ENCODE measurements at regions of chr22 and their contacts with region 1.

Region 1: DNA sequence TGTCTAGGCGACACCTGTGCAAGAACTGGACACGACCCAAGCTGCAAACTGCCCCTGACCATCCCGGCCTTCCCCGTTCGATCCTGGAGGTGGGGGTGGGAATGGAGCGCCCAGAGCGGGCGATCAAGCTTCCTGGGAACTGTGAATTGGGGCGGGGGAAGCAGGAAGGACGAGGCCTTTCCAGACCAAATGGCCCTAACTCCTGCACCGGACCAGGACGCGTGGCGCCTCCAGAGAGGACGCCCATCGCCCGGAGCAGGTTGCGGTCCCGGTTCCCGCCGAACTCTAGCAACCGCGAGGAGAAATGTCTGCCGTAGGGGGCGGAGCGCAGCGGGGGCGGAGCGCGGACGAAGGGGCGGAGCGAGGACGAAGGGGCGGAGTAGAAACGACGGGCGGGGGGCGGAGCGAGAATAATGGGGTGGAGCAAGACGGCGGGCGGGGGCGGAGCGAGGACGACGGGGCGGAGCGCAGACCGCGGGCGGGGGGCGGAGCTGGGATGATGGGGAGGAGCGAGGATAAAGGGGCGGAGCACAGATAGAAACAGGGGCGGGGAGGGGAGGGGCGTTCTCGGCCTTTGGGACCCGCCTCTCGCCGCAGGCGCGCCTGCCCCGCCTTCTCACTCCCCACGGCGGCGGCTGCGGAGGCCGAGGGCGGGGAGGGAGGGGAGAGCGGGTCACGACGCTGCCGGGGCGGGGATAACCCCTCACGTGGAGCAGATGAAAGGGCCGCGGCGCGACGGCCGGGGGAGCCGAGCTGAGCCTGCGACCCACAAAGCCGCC is at the start of gene ZNRF3:
- DNase-seq: peak; percentile 92
- ATAC-seq: peak; percentile 93
- H3K4me3 ChIP-seq: peak within 1 kb of the TSS in 4 of 5 experiments; percentile 65 to 85 (median 69)
- H3K4me3 Mint-ChIP-seq: peak within 1 kb of the TSS; percentile 88
- H3K27ac ChIP-seq: no peak within 1 kb of the TSS
- H3K27ac Mint-ChIP-seq: peak within 1 kb of the TSS; percentile 56
- H3K4me1 ChIP-seq: peaks cover 11 to 15% of the 10 kb centered on the region in 2 donors
- H3K4me1 Mint-ChIP-seq: peaks cover 24% of the 10 kb centered on the region
- H3K27me3 ChIP-seq: peaks cover 0 to 25% (median 23%) of the 10 kb centered on the region in 4 experiments
- H3K27me3 Mint-ChIP-seq: peaks cover 22% of the 10 kb centered on the region
- CTCF ChIP-seq: no peak
- total RNA-seq, gene ZNRF3: 0.70 and 0.71 TPM in 2 replicates

Region 2: DNA sequence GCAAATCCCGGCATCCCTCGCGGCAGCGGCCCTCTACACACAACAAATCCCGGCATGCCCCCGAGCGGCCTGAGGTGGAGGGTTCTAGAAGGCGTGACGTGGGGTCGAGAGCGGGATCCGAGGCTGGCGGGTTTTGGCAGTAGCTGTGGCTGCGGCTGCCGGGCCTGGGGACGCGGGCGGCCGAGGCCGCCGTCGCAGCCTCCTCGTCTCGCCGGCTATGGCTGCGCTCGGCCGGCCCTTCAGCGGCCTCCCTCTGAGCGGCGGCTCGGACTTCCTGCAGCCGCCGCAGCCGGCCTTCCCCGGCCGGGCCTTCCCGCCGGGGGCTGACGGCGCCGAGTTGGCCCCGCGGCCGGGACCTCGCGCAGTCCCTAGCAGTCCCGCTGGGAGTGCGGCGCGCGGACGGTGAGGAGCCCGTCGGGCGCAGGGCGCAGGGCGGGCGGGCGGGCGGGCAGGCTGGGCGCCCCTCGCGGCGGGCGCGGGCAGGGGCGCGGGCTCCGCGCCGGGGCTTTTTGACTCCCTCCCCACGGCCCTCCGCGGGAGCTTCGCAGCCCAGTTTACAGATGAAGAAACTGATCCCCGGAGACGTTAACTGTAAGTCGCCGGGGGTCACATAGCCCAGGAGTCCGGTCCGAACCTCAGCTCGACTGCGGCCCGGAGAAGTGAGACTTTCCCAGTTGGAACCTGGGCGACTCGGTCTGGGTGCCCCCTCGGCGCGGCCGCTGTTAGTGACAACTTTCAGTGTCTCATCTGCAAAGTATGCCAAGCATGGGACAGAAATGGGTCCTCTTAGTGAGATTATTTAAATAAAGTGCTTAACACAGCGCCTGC is 110.2 kb before region 1 on chr22 and contains the start of gene CCDC117:
- CTCF ChIA-PET with region 1: no interaction called
- POLR2A ChIA-PET with region 1: no interaction called
- intact Hi-C with region 1: loop called (anchors 1 kb)
- DNase-seq: peak; percentile 94
- ATAC-seq: peak; percentile 90
- H3K4me3 ChIP-seq: peak within 1 kb of the TSS; percentile 68 to 93 (median 75)
- H3K4me3 Mint-ChIP-seq: peak within 1 kb of the TSS; percentile 94
- H3K27ac ChIP-seq: peak within 1 kb of the TSS; percentile 80 to 95
- H3K27ac Mint-ChIP-seq: peak within 1 kb of the TSS; percentile 97
- H3K4me1 ChIP-seq: peaks cover 19 to 24% of the 10 kb centered on the region in 2 donors
- H3K4me1 Mint-ChIP-seq: peaks cover 19% of the 10 kb centered on the region
- H3K27me3 ChIP-seq: no peaks in the 10 kb centered on the region
- H3K27me3 Mint-ChIP-seq: no peaks in the 10 kb centered on the region
- CTCF ChIP-seq: peak; percentile 24
- total RNA-seq, gene CCDC117: 25.6 and 25.8 TPM in 2 replicates

Region 3: DNA sequence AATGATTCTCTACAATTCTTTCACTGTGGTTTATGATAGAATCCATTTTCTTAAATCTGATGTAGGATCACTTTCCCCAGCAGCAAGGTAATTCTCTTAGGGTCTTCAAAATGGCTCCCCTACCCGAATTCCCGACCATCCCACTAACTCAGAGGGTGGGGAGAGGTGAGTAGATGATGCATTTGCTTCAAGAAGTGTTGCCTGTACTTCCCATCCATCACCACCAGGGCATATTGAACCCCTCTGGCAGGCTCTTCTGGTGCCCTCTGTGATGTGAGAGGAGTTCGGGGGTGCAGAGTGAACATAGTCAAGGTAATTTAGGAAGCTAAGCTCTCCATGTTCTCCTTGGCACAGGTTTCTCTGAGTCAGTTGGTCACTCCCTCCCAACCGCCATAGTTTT is 52.6 kb after region 1 on chr22:
- CTCF ChIA-PET with region 1: no interaction called
- POLR2A ChIA-PET with region 1: no interaction called
- intact Hi-C with region 1: no loop called
- DNase-seq: no peak
- ATAC-seq: no peak
- H3K4me3 ChIP-seq: no peak overlapping the region
- H3K4me3 Mint-ChIP-seq: no peak overlapping the region
- H3K27ac ChIP-seq: no peak overlapping the region
- H3K27ac Mint-ChIP-seq: no peak overlapping the region
- H3K4me1 ChIP-seq: no peaks in the 10 kb centered on the region
- H3K4me1 Mint-ChIP-seq: peaks cover 3% of the 10 kb centered on the region
- H3K27me3 ChIP-seq: peaks cover 0 to 18% (median 2%) of the 10 kb centered on the region in 4 experiments
- H3K27me3 Mint-ChIP-seq: peaks cover 40% of the 10 kb centered on the region
- CTCF ChIP-seq: peak; percentile 27

Region 4: DNA sequence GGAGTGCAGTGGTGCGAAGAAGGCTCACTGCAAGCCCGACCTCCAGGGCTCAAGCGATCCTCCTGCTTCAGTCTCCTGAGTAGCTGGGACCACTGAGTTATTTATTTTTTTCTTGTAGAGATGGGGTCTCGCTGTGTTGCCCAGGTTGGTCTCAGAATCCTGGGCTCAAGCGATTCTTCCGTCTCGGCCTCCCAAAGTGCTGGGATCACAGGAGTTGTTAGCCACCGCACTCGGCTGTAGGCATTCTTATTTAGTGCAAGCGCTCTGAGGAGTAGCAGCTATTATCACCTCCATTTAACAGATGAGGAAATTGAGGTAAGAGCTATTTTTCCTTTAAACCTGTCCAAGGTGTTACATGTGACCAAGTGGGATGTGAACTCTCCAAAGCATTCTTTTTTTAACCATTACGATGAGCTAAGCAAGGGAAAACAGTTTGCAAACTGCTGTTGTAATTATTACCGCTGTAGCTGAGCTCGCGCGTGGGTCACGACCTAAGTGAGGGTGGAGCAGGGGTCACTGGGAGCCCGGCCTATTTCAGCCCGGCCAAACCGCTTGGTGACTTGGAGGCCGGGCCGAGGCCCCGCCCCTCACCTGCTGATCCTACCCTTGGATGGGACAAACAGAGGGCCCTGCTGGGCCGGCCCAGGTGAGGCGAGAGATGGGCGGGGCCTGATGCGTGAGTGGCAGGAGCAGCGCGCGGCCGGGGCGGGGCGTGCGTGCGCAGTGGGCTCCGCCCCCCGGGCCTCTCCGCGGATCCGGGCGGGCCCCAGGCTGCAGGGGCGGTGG is 189.3 kb after region 1 on chr22:
- CTCF ChIA-PET with region 1: no interaction called
- POLR2A ChIA-PET with region 1: no interaction called
- intact Hi-C with region 1: loop called (anchors 2 kb)
- DNase-seq: peak; percentile 85
- ATAC-seq: peak; percentile 99
- H3K4me3 ChIP-seq: peak overlapping the region in 4 of 5 experiments; percentile 15 to 59 (median 45)
- H3K4me3 Mint-ChIP-seq: peak overlapping the region; percentile 84
- H3K27ac ChIP-seq: no peak overlapping the region
- H3K27ac Mint-ChIP-seq: no peak overlapping the region
- H3K4me1 ChIP-seq: peaks cover 27 to 28% of the 10 kb centered on the region in 2 donors
- H3K4me1 Mint-ChIP-seq: peaks cover 22% of the 10 kb centered on the region
- H3K27me3 ChIP-seq: peaks cover 0 to 63% (median 36%) of the 10 kb centered on the region in 4 experiments
- H3K27me3 Mint-ChIP-seq: peaks cover 62% of the 10 kb centered on the region
- CTCF ChIP-seq: no peak

Region 5: DNA sequence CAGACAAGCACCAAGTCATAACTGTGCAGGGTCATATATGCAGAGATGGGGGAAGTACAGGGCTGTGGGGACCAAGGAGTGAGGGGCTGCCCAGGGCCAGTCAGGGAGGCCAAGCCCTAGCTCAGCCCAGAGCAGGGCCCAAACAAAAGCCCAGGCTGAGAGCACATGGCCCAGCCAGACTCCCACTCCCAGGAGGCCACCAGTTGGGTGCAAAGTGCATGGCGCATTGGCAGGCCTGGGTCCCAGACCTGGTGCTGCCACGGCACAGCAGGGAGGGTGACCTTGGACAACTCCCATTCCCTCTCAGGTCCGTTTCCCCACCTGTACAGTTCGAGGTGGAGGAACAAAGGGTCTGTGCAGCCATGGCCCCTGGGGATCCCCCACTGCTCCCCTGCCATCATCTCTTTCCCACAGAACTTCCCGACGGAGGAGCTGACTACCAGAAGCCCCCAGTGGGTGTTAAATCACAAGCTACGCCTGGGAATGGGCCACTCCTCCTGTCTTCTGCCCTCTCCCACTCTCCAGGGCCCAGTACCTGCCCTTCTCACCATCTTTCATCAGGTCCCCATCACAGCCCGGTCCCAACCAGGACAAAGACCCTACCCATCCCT is 697.2 kb after region 1 on chr22:
- CTCF ChIA-PET with region 1: no interaction called
- POLR2A ChIA-PET with region 1: no interaction called
- intact Hi-C with region 1: loop called (anchors 10 kb)
- DNase-seq: peak; percentile 26
- ATAC-seq: no peak
- H3K4me3 ChIP-seq: peak overlapping the region; percentile 21 to 81 (median 64)
- H3K4me3 Mint-ChIP-seq: peak overlapping the region; percentile 97
- H3K27ac ChIP-seq: no peak overlapping the region
- H3K27ac Mint-ChIP-seq: peak overlapping the region; percentile 97
- H3K4me1 ChIP-seq: peaks cover 5 to 10% of the 10 kb centered on the region in 2 donors
- H3K4me1 Mint-ChIP-seq: peaks cover 17% of the 10 kb centered on the region
- H3K27me3 ChIP-seq: no peaks in the 10 kb centered on the region
- H3K27me3 Mint-ChIP-seq: no peaks in the 10 kb centered on the region
- CTCF ChIP-seq: no peak

Region 6: GRCh38 chr22:30423982-30424963 is 1541.2 kb after region 1 on chr22:
- CTCF ChIA-PET with region 1: no interaction called
- POLR2A ChIA-PET with region 1: no interaction called
- intact Hi-C with region 1: loop called (anchors 10 kb)
- DNase-seq: peak; percentile 99
- ATAC-seq: peak; percentile 91
- H3K4me3 ChIP-seq: peak overlapping the region; percentile 54 to 84 (median 76)
- H3K4me3 Mint-ChIP-seq: peak overlapping the region; percentile 99
- H3K27ac ChIP-seq: peak overlapping the region; percentile 78 to 89
- H3K27ac Mint-ChIP-seq: peak overlapping the region; percentile 100
- H3K4me1 ChIP-seq: peaks cover 22 to 40% of the 10 kb centered on the region in 2 donors
- H3K4me1 Mint-ChIP-seq: peaks cover 48% of the 10 kb centered on the region
- H3K27me3 ChIP-seq: no peaks in the 10 kb centered on the region
- H3K27me3 Mint-ChIP-seq: no peaks in the 10 kb centered on the region
- CTCF ChIP-seq: no peak